ENCODE measurements at regions of chr1 and their contacts with region 1.

Region 1: GRCh38 chr1:187638733-187639434 is 810.1 kb downstream of the PLA2G4A start:
- DNase-seq: no peak
- H3K4me3 Mint-ChIP-seq: no peak overlapping the region
- H3K27ac Mint-ChIP-seq: no peak overlapping the region
- H3K4me1 Mint-ChIP-seq: no peaks in the 10 kb centered on the region
- H3K27me3 Mint-ChIP-seq: no peaks in the 10 kb centered on the region

Region 2: DNA sequence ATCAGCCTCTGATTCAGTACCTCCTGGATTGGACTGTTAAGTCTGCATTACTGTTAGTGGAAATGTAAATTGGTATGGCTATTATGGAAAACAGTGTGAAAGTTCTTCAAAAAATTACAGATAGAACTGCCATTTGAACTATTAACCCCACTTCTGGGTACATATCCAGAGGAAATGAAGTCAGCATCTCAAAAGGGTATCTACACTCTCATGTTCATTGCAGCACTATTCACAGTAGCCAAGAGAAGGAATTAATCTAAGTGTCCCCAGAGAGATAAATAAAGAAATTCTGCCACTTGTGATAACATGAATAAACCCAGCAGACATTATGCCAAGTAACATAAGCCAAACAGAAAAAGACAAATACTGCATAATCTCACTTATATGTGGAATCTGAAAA is 134.1 kb before region 1 on chr1:
- CTCF ChIA-PET with region 1: interaction called, 11 read pairs
- intact Hi-C with region 1: no loop called
- DNase-seq: no peak
- H3K4me3 Mint-ChIP-seq: no peak overlapping the region
- H3K27ac Mint-ChIP-seq: no peak overlapping the region
- H3K4me1 Mint-ChIP-seq: no peaks in the 10 kb centered on the region
- H3K27me3 Mint-ChIP-seq: no peaks in the 10 kb centered on the region

Region 3: GRCh38 chr1:187551061-187551460 is 87.8 kb before region 1 on chr1:
- CTCF ChIA-PET with region 1: no interaction called
- intact Hi-C with region 1: no loop called
- DNase-seq: no peak
- H3K4me3 Mint-ChIP-seq: no peak overlapping the region
- H3K27ac Mint-ChIP-seq: no peak overlapping the region
- H3K4me1 Mint-ChIP-seq: no peaks in the 10 kb centered on the region
- H3K27me3 Mint-ChIP-seq: no peaks in the 10 kb centered on the region

Region 4: GRCh38 chr1:187689129-187689528 is 50.2 kb after region 1 on chr1:
- CTCF ChIA-PET with region 1: no interaction called
- intact Hi-C with region 1: no loop called
- DNase-seq: no peak
- H3K4me3 Mint-ChIP-seq: no peak overlapping the region
- H3K27ac Mint-ChIP-seq: no peak overlapping the region
- H3K4me1 Mint-ChIP-seq: no peaks in the 10 kb centered on the region
- H3K27me3 Mint-ChIP-seq: no peaks in the 10 kb centered on the region

Measured in activated naive CD4-positive, alpha-beta T cell treated with anti-CD3 and anti-CD28 coated beads for 36 hours (primary cell).